ENCODE measurements at regions of chr2 and their contacts with region 1.

Region 1: GRCh38 chr2:237474931-237475703 is 11.9 kb upstream of the MLPH start:
- DNase-seq: peak; percentile 76
- H3K4me3 ChIP-seq: peak overlapping the region; percentile 62 to 66
- H3K27ac ChIP-seq: peak overlapping the region; percentile 86 to 89
- H3K4me1 ChIP-seq: peaks cover 2% of the 10 kb centered on the region
- H3K27me3 ChIP-seq: no peaks in the 10 kb centered on the region
- CTCF ChIP-seq: peak; percentile 88 to 93 (median 92)
- POLR2A ChIP-seq: peak; percentile 41

Region 2: GRCh38 chr2:237092920-237093781 is 382.0 kb before region 1 on chr2:
- intact Hi-C with region 1: loop called (anchors 5 kb)
- DNase-seq: peak; percentile 42
- H3K4me3 ChIP-seq: no peak overlapping the region
- H3K27ac ChIP-seq: peak overlapping the region; percentile 7 to 49
- H3K4me1 ChIP-seq: peaks cover 5% of the 10 kb centered on the region
- H3K27me3 ChIP-seq: no peaks in the 10 kb centered on the region
- CTCF ChIP-seq: peak in 3 of 4 experiments; percentile 50 to 69 (median 53)
- POLR2A ChIP-seq: no peak

Region 3: GRCh38 chr2:237122214-237122666 is 352.9 kb before region 1 on chr2:
- intact Hi-C with region 1: loop called (anchors 5 kb)
- DNase-seq: no peak
- H3K4me3 ChIP-seq: no peak overlapping the region
- H3K27ac ChIP-seq: no peak overlapping the region
- H3K4me1 ChIP-seq: no peaks in the 10 kb centered on the region
- H3K27me3 ChIP-seq: no peaks in the 10 kb centered on the region
- CTCF ChIP-seq: peak; percentile 17 to 67 (median 54)
- POLR2A ChIP-seq: no peak

Region 4: DNA sequence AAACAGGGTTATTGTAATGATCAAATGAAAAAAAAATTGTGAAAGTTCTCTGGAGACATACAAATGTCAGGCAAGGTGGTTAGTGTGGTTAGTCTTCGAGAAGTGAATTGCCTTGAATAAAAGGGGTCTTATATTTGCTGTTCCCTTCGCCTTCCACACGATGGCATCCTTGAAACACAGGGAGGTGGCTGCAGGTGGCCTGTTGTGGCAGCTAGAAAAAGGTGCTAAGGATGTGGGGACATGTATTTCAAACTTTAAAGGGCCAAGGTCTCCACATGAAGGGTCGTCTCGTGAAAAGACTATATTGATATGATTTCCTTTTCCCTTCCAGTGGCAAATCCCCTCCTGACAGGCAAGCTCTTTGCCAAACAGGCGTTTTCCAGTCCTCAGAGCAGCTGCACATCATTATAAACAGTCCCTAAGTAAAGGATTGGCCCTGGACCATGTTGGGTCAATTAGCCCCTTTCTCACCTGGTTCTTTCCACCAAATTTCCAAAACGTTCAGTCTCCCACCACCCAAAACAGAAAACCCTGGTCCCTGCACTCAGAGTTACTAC is 321.0 kb before region 1 on chr2:
- intact Hi-C with region 1: loop called (anchors 5 kb)
- DNase-seq: no peak
- H3K4me3 ChIP-seq: no peak overlapping the region
- H3K27ac ChIP-seq: no peak overlapping the region
- H3K4me1 ChIP-seq: no peaks in the 10 kb centered on the region
- H3K27me3 ChIP-seq: no peaks in the 10 kb centered on the region
- CTCF ChIP-seq: peak in 3 of 4 experiments; percentile 44 to 69 (median 63)
- POLR2A ChIP-seq: no peak

Region 5: DNA sequence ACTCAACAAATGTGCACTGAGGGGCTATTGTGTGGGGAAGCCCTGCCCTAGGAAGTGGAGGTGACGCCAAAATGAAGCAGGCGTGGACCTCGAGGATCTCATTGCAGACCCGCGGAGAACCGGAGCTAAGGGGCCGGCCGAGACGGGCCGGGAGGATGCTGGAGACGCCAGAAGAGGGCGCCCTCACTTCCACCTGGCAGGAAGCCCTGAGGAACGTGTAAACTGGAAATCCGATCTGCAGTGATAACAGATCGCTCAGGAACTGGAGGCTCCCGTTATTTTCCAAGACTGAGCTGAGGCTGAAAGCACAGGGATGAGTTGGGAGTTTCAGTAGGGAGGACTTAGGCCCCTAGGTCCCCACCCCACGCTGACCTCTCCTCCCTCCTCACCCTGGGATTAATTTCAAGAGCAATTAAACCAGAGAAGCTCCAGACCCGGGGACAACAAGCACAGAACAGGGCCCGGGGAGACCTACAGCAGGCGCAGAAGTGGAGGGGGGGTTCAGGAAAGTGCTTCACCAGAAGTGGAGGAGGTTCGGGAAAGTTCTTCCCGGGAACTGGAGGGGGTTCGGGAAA is 53.5 kb before region 1 on chr2:
- intact Hi-C with region 1: loop called (anchors 2 kb)
- DNase-seq: peak; percentile 68
- H3K4me3 ChIP-seq: no peak overlapping the region
- H3K27ac ChIP-seq: peak overlapping the region in 1 of 2 donors; percentile 43
- H3K4me1 ChIP-seq: peaks cover 6% of the 10 kb centered on the region
- H3K27me3 ChIP-seq: no peaks in the 10 kb centered on the region
- CTCF ChIP-seq: peak; percentile 70 to 81 (median 79)
- POLR2A ChIP-seq: no peak

Measured in prostate gland (tissue), 2 donors.